ENCODE measurements at regions of chr5 and their contacts with region 1.

Region 1: GRCh38 chr5:138824924-138825863 is 49.9 kb downstream of the LRRTM2 start:
- DNase-seq: peak in 3 of 5 donors; percentile 6 to 22 (median 7)
- H3K4me3 ChIP-seq: no peak overlapping the region
- H3K4me3 Mint-ChIP-seq: no peak overlapping the region
- H3K27ac ChIP-seq: no peak overlapping the region
- H3K27ac Mint-ChIP-seq: no peak overlapping the region
- H3K4me1 ChIP-seq: no peaks in the 10 kb centered on the region
- H3K4me1 Mint-ChIP-seq: no peaks in the 10 kb centered on the region
- H3K27me3 ChIP-seq: no peaks in the 10 kb centered on the region
- H3K27me3 Mint-ChIP-seq: no peaks in the 10 kb centered on the region

Region 2: GRCh38 chr5:138789771-138790242 is 35.4 kb before region 1 on chr5:
- CTCF ChIA-PET with region 1: interaction called, 15 read pairs
- POLR2A ChIA-PET with region 1: no interaction called
- intact Hi-C with region 1: no loop called
- DNase-seq: peak in 4 of 5 donors; percentile 7 to 26 (median 13)
- H3K4me3 ChIP-seq: no peak overlapping the region
- H3K4me3 Mint-ChIP-seq: no peak overlapping the region
- H3K27ac ChIP-seq: no peak overlapping the region
- H3K27ac Mint-ChIP-seq: no peak overlapping the region
- H3K4me1 ChIP-seq: peaks cover 8% of the 10 kb centered on the region
- H3K4me1 Mint-ChIP-seq: peaks cover 12 to 19% (median 16%) of the 10 kb centered on the region in 4 donors
- H3K27me3 ChIP-seq: no peaks in the 10 kb centered on the region
- H3K27me3 Mint-ChIP-seq: peaks cover 2 to 5% of the 10 kb centered on the region in 2 donors

Region 3: GRCh38 chr5:139262742-139263445 is 437.7 kb after region 1 on chr5:
- CTCF ChIA-PET with region 1: interaction called, 21 read pairs
- POLR2A ChIA-PET with region 1: interaction called, 3 read pairs
- intact Hi-C with region 1: no loop called
- DNase-seq: peak; percentile 46 to 62 (median 53)
- H3K4me3 ChIP-seq: no peak overlapping the region
- H3K4me3 Mint-ChIP-seq: no peak overlapping the region
- H3K27ac ChIP-seq: no peak overlapping the region
- H3K27ac Mint-ChIP-seq: peak overlapping the region in 3 of 7 donors; percentile 19 to 46 (median 30)
- H3K4me1 ChIP-seq: no peaks in the 10 kb centered on the region
- H3K4me1 Mint-ChIP-seq: peaks cover 1 to 5% (median 1%) of the 10 kb centered on the region in 4 donors
- H3K27me3 ChIP-seq: no peaks in the 10 kb centered on the region
- H3K27me3 Mint-ChIP-seq: peaks cover 2 to 5% of the 10 kb centered on the region in 2 donors

Measured in CD4-positive, alpha-beta memory T cell (primary cell).